HEK293 (cell line): ENCODE measurements at regions of chr5 and their contacts with region 1.

Region 1: GRCh38 chr5:72307968-72308852 is 11.8 kb downstream of the MRPS27 start:
- H3K4me3 ChIP-seq: peak overlapping the region; percentile 86
- H3K27ac ChIP-seq: peak overlapping the region; percentile 89
- H3K4me1 ChIP-seq: peaks cover 3% of the 10 kb centered on the region; the same call in 1 of the 2 replicates
- CTCF ChIP-seq: peak; percentile 97

Region 2: GRCh38 chr5:71782771-71783770 is 525.1 kb before region 1 on chr5:
- CTCF ChIA-PET with region 1: interaction called, 14 read pairs
- POLR2A ChIA-PET with region 1: interaction called, 3 read pairs
- H3K4me3 ChIP-seq: no peak overlapping the region
- H3K27ac ChIP-seq: no peak overlapping the region
- H3K4me1 ChIP-seq: no peaks in the 10 kb centered on the region
- CTCF ChIP-seq: 0 out of 2 replicates have a peak, but pooled peaks have one; percentile 46

Region 3: DNA sequence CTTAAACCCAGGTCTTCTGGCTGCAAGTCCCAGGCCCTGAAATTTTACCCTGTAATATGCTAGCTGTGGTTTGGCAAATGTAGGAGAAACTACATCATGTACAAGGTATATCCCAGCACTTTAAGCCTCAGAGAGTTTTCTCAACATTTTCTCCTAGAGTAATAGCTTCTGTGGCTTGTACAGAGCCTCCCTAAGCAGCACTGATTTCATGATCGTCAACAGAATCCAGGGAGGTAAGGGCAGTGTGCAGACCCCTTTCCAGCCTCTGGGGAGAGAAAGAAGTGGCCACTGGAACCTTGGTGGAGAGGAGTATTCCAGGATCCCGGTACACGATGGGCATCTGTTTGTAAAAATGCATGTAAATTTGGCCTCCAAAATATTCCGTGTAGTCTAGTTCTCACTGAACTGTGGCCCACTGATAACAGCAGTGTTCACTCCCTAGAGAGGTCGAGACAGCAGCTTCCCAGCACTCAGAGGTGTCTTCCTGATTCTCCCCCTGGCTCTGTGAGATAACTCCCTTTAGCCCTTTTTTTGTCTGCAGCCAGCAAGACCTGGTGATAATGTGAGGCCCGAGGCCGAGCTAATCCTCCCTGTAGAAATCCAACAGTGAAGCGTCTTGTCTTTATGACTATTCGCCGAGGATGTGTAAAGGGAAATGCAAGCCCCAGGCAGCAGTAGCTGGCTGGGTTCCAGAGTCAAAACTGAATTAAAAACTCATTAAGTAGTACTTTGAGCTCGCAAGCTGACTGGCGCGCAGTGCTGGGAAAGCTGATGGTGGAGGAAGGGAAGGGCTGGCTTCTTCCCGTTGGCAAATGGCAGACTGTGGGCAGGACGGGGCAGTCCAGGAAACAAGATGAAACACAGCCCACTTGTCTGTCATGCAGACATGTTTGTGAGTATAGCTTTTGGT is 141.9 kb before region 1 on chr5:
- CTCF ChIA-PET with region 1: interaction called, 6 read pairs
- POLR2A ChIA-PET with region 1: interaction called, 10 read pairs
- H3K4me3 ChIP-seq: no peak overlapping the region
- H3K27ac ChIP-seq: peak overlapping the region; percentile 82
- H3K4me1 ChIP-seq: peaks cover 16% of the 10 kb centered on the region
- CTCF ChIP-seq: no peak

Region 4: DNA sequence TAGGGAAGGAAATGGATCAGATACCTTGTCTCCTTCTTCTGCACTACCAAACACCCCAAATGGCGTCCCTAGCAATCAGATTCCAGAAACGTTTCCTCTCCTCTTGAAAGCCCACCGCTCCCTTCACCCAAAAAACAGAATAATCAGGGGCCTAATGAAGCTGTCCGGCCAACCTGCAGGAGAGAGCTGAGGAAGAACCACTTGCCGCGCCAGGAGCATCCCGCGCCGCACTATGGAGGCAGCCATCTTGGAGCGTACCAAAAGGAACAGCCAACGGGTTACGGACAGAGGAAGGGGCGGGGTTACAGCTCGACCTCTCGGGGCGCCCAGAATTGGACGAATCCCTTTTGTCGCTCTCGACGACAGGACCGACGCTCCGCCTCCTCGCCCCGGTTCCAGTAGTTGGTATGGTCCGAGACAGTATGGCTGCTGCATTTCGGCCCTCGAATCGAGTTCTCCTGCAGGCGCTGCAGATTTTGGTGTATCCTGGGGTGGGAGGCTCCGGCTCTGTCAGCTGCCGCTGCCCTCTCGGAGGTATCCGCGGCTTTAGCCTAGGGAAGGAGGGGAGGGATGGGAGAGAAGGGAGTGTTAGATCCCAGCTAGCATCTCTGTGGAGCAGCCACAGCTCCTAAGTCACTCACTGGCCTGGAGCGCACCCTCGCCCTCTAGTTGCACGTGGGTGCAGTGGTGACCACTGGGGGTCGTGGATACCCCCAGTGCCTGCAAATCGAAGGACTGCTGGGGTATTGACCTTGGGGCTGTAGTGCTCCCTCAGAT is 12.0 kb after region 1 on chr5 and contains the starts of genes MRPS27 and PTCD2:
- CTCF ChIA-PET with region 1: interaction called, 17 read pairs
- POLR2A ChIA-PET with region 1: interaction called, 25 read pairs
- H3K4me3 ChIP-seq: peak within 1 kb of the TSS; percentile 95
- H3K27ac ChIP-seq: peak within 1 kb of the TSS; percentile 77
- H3K4me1 ChIP-seq: peaks cover under 1% of the 10 kb centered on the region; the same call in 1 of the 2 replicates
- CTCF ChIP-seq: peak; percentile 89

Region 5: DNA sequence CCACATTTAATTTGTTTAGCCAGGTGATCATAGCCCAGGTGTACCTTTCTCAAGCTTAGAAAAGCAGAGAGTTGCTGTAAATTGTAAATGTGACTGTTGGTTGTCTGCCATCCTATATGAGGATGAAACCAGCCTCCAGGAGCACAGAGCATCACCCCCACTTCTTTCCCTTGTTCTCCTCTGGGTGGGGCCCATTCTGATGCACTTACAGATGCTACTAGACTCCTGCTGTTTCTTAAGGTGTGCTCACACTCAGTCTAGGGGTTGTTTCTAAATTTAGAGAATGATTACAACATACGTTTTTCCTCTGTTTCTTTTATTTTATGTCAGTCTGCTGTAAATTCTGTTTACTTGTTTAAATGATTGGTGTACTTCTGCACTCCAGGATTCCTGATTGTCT is 22.5 kb after region 1 on chr5:
- CTCF ChIA-PET with region 1: no interaction called
- POLR2A ChIA-PET with region 1: no interaction called
- H3K4me3 ChIP-seq: no peak overlapping the region
- H3K27ac ChIP-seq: no peak overlapping the region
- H3K4me1 ChIP-seq: no peaks in the 10 kb centered on the region
- CTCF ChIP-seq: no peak

Region 6: DNA sequence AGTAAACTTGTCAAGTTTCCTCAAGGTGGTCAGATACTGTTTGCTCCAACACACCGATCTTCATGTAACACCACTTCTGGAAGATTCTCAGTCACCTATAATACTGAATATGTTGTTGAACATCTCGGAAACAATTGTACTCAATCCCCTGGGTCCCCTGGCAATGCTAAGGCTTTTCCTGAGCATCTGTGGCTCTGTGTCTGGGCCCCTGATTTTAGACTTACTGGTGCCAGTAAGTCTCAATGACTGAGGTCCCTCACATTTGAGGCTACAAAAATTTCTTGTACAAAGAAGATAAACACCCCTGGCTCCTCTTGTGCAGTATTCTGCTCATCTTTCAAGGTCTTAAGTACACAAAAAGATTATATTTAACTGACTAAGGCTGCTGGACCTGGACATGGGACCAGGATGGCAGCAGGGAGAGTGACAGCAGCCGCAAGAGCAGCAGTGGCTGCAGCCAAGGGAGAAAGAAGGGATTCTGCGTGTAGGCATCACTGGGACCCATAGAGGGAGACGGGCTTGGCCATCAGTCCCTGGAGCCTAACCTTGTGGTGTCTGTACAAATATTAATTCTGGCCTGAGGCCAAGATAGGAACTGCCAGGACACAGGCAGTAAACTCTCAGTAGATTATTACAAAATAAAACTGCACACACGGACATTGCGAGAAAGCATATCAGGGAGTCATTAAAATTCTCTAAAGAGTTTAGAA is 459.2 kb after region 1 on chr5:
- CTCF ChIA-PET with region 1: no interaction called
- POLR2A ChIA-PET with region 1: no interaction called
- H3K4me3 ChIP-seq: no peak overlapping the region
- H3K27ac ChIP-seq: no peak overlapping the region
- H3K4me1 ChIP-seq: peaks cover 9% of the 10 kb centered on the region; the same call in 1 of the 2 replicates
- CTCF ChIP-seq: peak; percentile 47